ENCODE measurements at regions of chr12 and their contacts with region 1.

Region 1: GRCh38 chr12:31682136-31682962 is 22.9 kb downstream of the ETFBKMT start:
- DNase-seq: peak; percentile 68 to 73 (median 71)
- H3K4me3 ChIP-seq: no peak overlapping the region
- H3K4me3 Mint-ChIP-seq: peak overlapping the region in 4 of 8 donors; percentile 58 to 80 (median 71)
- H3K27ac ChIP-seq: no peak overlapping the region
- H3K27ac Mint-ChIP-seq: peak overlapping the region; percentile 53 to 92 (median 88)
- H3K4me1 ChIP-seq: no peaks in the 10 kb centered on the region
- H3K4me1 Mint-ChIP-seq: peaks cover 6 to 15% (median 9%) of the 10 kb centered on the region in 4 donors
- H3K27me3 ChIP-seq: no peaks in the 10 kb centered on the region
- H3K27me3 Mint-ChIP-seq: no peaks in the 10 kb centered on the region

Region 2: GRCh38 chr12:31659087-31659933 is 23.0 kb before region 1 on chr12 and contains the start of gene ETFBKMT:
- CTCF ChIA-PET with region 1: interaction called, 16 read pairs
- POLR2A ChIA-PET with region 1: interaction called, 3 read pairs
- intact Hi-C with region 1: no loop called
- DNase-seq: peak; percentile 91 to 97 (median 94)
- H3K4me3 ChIP-seq: peak within 1 kb of the TSS; percentile 86 to 89
- H3K4me3 Mint-ChIP-seq: peak within 1 kb of the TSS; percentile 92 to 99 (median 94)
- H3K27ac ChIP-seq: peak within 1 kb of the TSS; percentile 86
- H3K27ac Mint-ChIP-seq: peak within 1 kb of the TSS; percentile 91 to 99 (median 98)
- H3K4me1 ChIP-seq: peaks cover 17% of the 10 kb centered on the region
- H3K4me1 Mint-ChIP-seq: peaks cover 8 to 21% (median 14%) of the 10 kb centered on the region in 4 donors
- H3K27me3 ChIP-seq: no peaks in the 10 kb centered on the region
- H3K27me3 Mint-ChIP-seq: no peaks in the 10 kb centered on the region
- total RNA-seq, gene ETFBKMT: 1.5 to 1.8 TPM

Region 3: DNA sequence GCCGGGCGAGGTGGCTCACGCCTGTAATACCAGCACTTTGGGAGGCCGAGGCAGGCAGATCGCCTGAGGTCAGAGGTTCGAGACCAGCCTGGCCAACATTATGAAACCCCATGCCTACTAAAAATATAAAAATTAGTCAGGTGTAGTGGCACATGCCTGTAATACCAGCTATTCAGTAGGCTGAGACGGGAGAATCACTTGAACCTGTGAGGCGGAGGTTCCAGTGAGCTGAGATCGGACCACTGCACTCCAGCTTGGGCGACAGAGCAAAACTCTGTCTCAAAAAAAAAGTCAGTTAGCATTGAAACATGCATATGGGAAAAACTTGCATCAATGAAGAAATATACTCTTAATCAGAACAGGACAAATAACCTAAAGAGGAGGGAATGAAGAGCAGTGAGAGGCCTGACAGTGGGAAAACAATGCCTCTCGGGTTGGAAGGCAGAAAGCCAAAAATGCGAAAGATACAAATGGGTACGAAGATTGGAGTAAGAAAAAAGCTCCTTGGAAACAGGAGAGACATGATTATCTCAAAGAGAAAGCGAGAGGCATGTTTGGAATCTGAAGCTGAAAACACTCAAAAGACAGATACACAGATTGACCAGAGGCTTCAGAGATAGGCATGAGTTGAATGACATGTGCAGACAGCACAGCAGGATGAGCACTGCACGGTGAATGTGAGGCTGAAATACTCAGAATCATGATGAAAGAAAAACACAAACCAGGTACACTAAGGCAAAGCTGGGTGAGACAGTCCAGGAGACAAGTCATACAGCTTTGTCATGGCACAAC is 307.4 kb after region 1 on chr12:
- CTCF ChIA-PET with region 1: no interaction called
- POLR2A ChIA-PET with region 1: no interaction called
- intact Hi-C with region 1: loop called (anchors 5 kb)
- DNase-seq: no peak
- H3K4me3 ChIP-seq: no peak overlapping the region
- H3K4me3 Mint-ChIP-seq: peak overlapping the region in 1 of 8 donors; percentile 58
- H3K27ac ChIP-seq: no peak overlapping the region
- H3K27ac Mint-ChIP-seq: peak overlapping the region in 5 of 7 donors; percentile 14 to 84 (median 63)
- H3K4me1 ChIP-seq: peaks cover 7% of the 10 kb centered on the region
- H3K4me1 Mint-ChIP-seq: peaks cover 20 to 28% (median 27%) of the 10 kb centered on the region in 4 donors
- H3K27me3 ChIP-seq: no peaks in the 10 kb centered on the region
- H3K27me3 Mint-ChIP-seq: no peaks in the 10 kb centered on the region

Region 4: GRCh38 chr12:32302218-32303173 is 620.1 kb after region 1 on chr12:
- CTCF ChIA-PET with region 1: interaction called, 9 read pairs
- POLR2A ChIA-PET with region 1: no interaction called
- intact Hi-C with region 1: loop called (anchors 1 kb)
- DNase-seq: peak in 4 of 5 donors; percentile 6 to 18 (median 8)
- H3K4me3 ChIP-seq: no peak overlapping the region
- H3K4me3 Mint-ChIP-seq: no peak overlapping the region
- H3K27ac ChIP-seq: no peak overlapping the region
- H3K27ac Mint-ChIP-seq: peak overlapping the region in 2 of 7 donors; percentile 20 to 29
- H3K4me1 ChIP-seq: no peaks in the 10 kb centered on the region
- H3K4me1 Mint-ChIP-seq: peaks cover 0 to 4% (median under 1%) of the 10 kb centered on the region in 4 donors
- H3K27me3 ChIP-seq: no peaks in the 10 kb centered on the region
- H3K27me3 Mint-ChIP-seq: no peaks in the 10 kb centered on the region